Psoas muscle (tissue), 8 donors: ENCODE measurements at regions of chr1 and their contacts with region 1.

Region 1: DNA sequence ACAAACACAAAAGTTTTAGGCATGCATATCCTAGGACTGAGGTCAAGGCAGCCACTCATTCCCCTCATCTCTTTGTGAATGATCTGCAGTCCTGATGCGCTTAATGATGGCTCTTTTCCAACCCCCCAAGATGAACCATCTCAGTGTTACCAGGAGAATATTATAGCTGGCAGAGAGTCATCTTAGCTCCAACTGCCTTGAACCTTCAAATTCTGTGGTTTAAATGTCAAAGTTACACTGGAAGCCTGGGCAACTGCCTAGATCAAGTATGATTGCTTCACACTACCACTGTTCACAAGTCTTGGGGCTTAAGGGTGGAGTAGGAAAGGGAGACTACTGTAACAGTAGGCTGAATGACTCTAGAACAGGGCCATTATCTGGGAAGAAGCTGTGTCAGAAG is 8.0 kb upstream of the MYBPHL start:
- DNase-seq: no peak
- ATAC-seq: no peak
- H3K4me3 ChIP-seq: no peak overlapping the region
- H3K27ac ChIP-seq: no peak overlapping the region
- H3K4me1 ChIP-seq: no peaks in the 10 kb centered on the region
- H3K27me3 ChIP-seq: no peaks in the 10 kb centered on the region
- CTCF ChIP-seq: no peak

Region 2: GRCh38 chr1:109350655-109351054 is 35.9 kb after region 1 on chr1:
- intact Hi-C with region 1: loop called in 1 of 2 experiments (anchors 5 kb)
- DNase-seq: no peak
- ATAC-seq: no peak
- H3K4me3 ChIP-seq: no peak overlapping the region
- H3K27ac ChIP-seq: no peak overlapping the region
- H3K4me1 ChIP-seq: no peaks in the 10 kb centered on the region
- H3K27me3 ChIP-seq: no peaks in the 10 kb centered on the region
- CTCF ChIP-seq: no peak